CD4-positive, alpha-beta memory T cell (primary cell): ENCODE measurements at regions of chr19 and their contacts with region 1.

Region 1: DNA sequence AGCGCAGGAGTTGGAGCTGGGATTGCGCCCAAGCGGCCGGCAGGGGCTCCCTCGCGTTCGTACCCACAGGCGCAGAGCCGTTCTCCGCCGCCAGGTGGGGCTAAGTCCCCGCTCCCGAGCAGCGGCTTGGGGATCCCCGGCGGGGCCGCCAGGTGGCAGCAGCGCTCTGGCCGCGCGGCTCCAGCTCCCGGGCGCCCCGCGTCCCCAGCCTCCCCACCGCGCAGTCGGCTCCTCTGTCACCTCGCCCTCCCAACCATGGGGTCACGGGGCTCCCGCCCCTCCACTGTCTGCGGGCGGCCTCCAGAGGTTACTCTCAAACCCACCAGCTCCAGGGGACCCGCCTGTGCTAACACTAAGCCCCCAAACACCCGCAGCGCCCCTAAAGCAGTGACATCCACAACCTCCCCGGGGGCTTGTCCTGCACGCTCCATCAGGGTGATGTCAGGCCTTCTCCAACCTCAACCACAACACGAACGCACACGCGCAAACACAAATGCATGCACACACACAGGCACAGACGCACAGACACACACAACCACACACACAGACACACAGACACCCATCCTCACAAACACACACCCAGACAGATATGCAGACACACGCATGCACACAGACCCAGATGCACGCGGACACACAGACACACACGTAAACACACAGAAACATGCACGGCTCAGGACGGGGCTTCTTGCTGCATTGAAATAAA is 18.4 kb upstream of the KCTD15 start:
- DNase-seq: peak; percentile 73 to 86 (median 83)
- H3K4me3 ChIP-seq: no peak overlapping the region
- H3K4me3 Mint-ChIP-seq: peak overlapping the region; percentile 7 to 62 (median 44)
- H3K27ac ChIP-seq: no peak overlapping the region
- H3K27ac Mint-ChIP-seq: peak overlapping the region in 2 of 7 donors; percentile 61 to 70
- H3K4me1 ChIP-seq: peaks cover 12% of the 10 kb centered on the region
- H3K4me1 Mint-ChIP-seq: peaks cover 5 to 48% (median 18%) of the 10 kb centered on the region in 4 donors
- H3K27me3 ChIP-seq: peaks cover 3% of the 10 kb centered on the region
- H3K27me3 Mint-ChIP-seq: peaks cover 10 to 26% of the 10 kb centered on the region in 2 donors

Region 2: GRCh38 chr19:33430674-33431277 is 347.5 kb before region 1 on chr19:
- CTCF ChIA-PET with region 1: interaction called, 14 read pairs
- POLR2A ChIA-PET with region 1: no interaction called
- intact Hi-C with region 1: no loop called
- DNase-seq: peak; percentile 52 to 70 (median 57)
- H3K4me3 ChIP-seq: no peak overlapping the region
- H3K4me3 Mint-ChIP-seq: peak overlapping the region; percentile 14 to 81 (median 58)
- H3K27ac ChIP-seq: peak overlapping the region; percentile 11
- H3K27ac Mint-ChIP-seq: peak overlapping the region; percentile 45 to 96 (median 87)
- H3K4me1 ChIP-seq: peaks cover 10% of the 10 kb centered on the region
- H3K4me1 Mint-ChIP-seq: peaks cover 4 to 22% (median 15%) of the 10 kb centered on the region in 4 donors
- H3K27me3 ChIP-seq: no peaks in the 10 kb centered on the region
- H3K27me3 Mint-ChIP-seq: no peaks in the 10 kb centered on the region

Region 3: GRCh38 chr19:33819880-33820781 is 41.9 kb after region 1 on chr19:
- CTCF ChIA-PET with region 1: interaction called, 19 read pairs
- POLR2A ChIA-PET with region 1: no interaction called
- intact Hi-C with region 1: no loop called
- DNase-seq: peak; percentile 52 to 68 (median 64)
- H3K4me3 ChIP-seq: peak overlapping the region; percentile 47 to 48
- H3K4me3 Mint-ChIP-seq: peak overlapping the region; percentile 76 to 86 (median 80)
- H3K27ac ChIP-seq: peak overlapping the region; percentile 36
- H3K27ac Mint-ChIP-seq: peak overlapping the region in 6 of 7 donors; percentile 29 to 77 (median 70)
- H3K4me1 ChIP-seq: peaks cover 18% of the 10 kb centered on the region
- H3K4me1 Mint-ChIP-seq: peaks cover 8 to 48% (median 33%) of the 10 kb centered on the region in 4 donors
- H3K27me3 ChIP-seq: no peaks in the 10 kb centered on the region
- H3K27me3 Mint-ChIP-seq: no peaks in the 10 kb centered on the region

Region 4: GRCh38 chr19:34096020-34096915 is 318.0 kb after region 1 on chr19:
- CTCF ChIA-PET with region 1: interaction called, 37 read pairs
- POLR2A ChIA-PET with region 1: interaction called, 7 read pairs
- intact Hi-C with region 1: no loop called
- DNase-seq: peak in 4 of 5 donors; percentile 37 to 47 (median 42)
- H3K4me3 ChIP-seq: no peak overlapping the region
- H3K4me3 Mint-ChIP-seq: no peak overlapping the region
- H3K27ac ChIP-seq: no peak overlapping the region
- H3K27ac Mint-ChIP-seq: no peak overlapping the region
- H3K4me1 ChIP-seq: no peaks in the 10 kb centered on the region
- H3K4me1 Mint-ChIP-seq: peaks cover 0 to 2% (median under 1%) of the 10 kb centered on the region in 4 donors
- H3K27me3 ChIP-seq: peaks cover 4% of the 10 kb centered on the region
- H3K27me3 Mint-ChIP-seq: peaks cover 10 to 18% of the 10 kb centered on the region in 2 donors

Region 5: DNA sequence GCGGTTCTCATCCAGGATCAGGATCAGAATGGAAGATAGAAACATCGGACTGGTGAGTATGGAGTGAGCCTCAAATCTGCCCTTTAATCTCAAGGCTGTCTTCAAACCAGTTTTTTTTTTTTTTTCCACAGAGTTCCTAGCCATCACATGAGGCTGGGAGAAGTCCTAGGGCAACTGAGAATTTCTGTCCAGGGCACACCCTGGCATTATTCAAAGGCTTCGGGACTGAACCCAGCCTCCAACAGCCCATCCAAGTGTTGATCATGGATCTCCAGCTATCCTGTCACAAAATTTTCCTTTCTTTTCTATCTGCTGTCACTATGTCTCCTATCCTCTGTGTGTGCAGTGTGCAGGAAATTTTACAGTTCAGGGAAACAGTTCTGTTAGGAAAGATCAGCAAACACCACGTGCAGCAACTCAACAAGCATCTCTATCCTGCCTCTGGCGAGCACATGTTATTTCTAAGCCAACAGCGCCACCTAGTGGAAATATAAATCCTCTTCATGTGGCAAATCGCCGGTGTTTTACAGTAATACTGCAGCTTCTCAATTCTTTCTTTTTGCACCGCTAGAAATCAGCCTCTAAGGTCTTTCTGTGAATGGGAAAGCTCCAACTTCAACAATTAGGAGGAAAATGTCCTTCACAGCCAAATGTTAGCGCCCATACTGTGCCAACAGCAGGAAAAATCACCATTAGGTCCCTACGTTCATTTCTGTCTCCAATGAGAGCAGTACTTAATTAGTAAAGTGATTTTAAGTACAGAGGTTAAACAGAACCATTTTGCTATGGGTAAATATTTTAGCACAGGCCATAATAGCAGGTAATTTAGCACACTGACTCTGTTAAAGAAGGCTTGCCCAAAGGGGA is 934.4 kb after region 1 on chr19:
- CTCF ChIA-PET with region 1: no interaction called
- POLR2A ChIA-PET with region 1: no interaction called
- intact Hi-C with region 1: loop called (anchors 5 kb)
- DNase-seq: peak; percentile 64 to 74 (median 71)
- H3K4me3 ChIP-seq: no peak overlapping the region
- H3K4me3 Mint-ChIP-seq: no peak overlapping the region
- H3K27ac ChIP-seq: no peak overlapping the region
- H3K27ac Mint-ChIP-seq: no peak overlapping the region
- H3K4me1 ChIP-seq: no peaks in the 10 kb centered on the region
- H3K4me1 Mint-ChIP-seq: peaks cover 0 to 1% (median under 1%) of the 10 kb centered on the region in 4 donors
- H3K27me3 ChIP-seq: no peaks in the 10 kb centered on the region
- H3K27me3 Mint-ChIP-seq: peaks cover 15 to 17% of the 10 kb centered on the region in 2 donors